Heart right ventricle (tissue), 16 donors: ENCODE measurements at regions of chr4 and their contacts with region 1.

Region 1: DNA sequence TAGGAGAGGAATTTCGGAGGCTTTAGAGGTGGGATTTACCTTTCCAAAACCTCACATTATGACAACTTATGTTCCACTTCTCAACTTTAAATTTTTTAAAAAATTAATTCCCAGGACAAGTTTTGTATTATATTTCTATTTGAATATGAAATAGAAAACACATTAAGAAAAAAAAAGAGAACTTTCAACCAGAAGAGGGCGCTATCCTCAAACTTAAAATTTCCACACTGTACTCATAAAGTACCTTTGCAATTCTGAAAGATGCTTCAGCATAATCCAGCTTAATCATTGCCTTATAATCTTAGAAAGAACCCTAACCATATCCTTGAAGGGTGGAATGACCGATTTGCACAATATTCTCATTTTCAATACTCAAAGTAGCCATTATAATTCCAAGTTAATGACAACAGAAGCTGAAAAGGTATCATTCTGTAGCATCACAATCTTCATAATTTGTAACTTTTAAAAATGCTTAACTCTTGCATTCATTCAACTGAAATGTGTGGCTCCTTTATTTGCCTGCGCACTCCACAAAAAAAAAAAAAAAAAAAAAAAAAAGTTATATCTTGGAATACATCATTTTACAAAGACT is 158.0 kb downstream of the KCNIP4 start:
- DNase-seq: no peak
- ATAC-seq: no peak
- H3K4me3 ChIP-seq: no peak overlapping the region
- H3K27ac ChIP-seq: no peak overlapping the region
- H3K4me1 ChIP-seq: no peaks in the 10 kb centered on the region
- H3K27me3 ChIP-seq: no peaks in the 10 kb centered on the region
- CTCF ChIP-seq: peak; percentile 11 to 62 (median 53)

Region 2: DNA sequence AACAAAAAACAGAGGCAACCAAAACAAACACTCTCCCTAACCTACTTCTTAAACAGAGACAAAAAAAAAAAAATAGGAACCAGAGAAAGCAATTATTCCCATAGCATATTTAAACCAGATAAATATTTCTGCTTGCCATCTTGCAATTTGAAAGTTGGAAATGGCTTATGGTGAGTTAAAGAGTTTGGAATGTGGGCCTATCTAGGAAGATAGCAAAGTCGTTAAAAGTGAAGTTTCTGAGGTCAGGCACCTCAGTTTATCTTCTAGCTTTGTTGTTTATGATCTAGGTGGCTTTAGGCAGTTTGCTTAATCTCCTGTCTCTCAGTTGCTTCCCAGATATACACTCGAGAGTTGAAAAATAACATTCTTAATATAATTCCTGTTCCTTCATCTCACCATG is 126.2 kb before region 1 on chr4:
- intact Hi-C with region 1: no loop called
- DNase-seq: no peak
- ATAC-seq: no peak
- H3K4me3 ChIP-seq: no peak overlapping the region
- H3K27ac ChIP-seq: no peak overlapping the region
- H3K4me1 ChIP-seq: no peaks in the 10 kb centered on the region
- H3K27me3 ChIP-seq: no peaks in the 10 kb centered on the region
- CTCF ChIP-seq: no peak

Region 3: DNA sequence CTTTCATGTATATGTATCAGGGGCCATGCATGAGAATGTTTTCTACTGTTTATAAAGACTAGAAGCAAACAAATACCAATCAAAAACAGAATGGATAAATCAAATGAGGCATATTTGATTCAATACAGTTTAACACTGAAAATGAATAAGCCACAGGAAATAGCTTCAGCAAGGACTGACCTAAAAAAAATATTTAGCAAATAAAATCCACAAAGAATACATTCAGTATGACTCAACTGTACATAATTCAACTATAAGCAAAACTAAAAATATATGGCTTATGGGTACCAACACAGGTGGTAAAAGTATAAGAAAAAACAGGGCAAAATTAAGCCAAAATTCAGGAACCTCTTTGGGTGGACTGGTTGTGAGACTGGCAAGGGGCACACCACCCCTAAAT is 45.2 kb after region 1 on chr4:
- intact Hi-C with region 1: no loop called
- DNase-seq: no peak
- ATAC-seq: no peak
- H3K4me3 ChIP-seq: no peak overlapping the region
- H3K27ac ChIP-seq: no peak overlapping the region
- H3K4me1 ChIP-seq: no peaks in the 10 kb centered on the region
- H3K27me3 ChIP-seq: no peaks in the 10 kb centered on the region
- CTCF ChIP-seq: no peak

Region 4: DNA sequence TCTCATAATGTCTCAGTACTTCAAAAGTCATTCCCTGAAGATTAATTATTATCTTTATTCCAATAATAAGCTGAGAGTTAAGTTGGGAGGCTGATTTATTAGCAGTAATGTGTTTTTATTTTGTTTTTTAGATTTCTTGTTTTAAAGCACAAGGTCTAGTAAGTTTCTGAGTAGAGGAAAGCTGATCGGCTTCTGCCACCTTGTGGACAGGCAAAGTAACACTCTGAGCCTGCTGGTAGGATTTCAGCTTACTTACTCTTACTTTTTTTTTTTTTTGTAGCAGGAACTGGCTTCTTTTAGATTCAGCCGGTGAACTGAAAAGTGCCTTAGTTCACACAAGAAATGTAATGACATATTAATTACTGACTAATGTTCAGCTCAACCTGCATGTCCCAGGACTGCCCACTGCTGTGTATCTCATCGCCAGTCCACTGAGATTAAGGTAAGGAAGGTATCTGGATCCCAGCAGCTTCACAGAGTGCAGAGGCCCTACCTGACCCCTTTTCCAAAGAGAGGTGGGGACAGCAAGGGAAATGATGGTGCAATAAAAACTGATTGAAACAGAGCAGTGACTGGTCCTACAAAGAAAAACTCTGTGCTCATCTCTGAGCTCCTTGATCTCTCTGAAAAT is 598.8 kb after region 1 on chr4:
- intact Hi-C with region 1: loop called (anchors 1 to 5 kb)
- DNase-seq: peak in 1 of 2 donors; percentile 25
- ATAC-seq: peak in 1 of 8 donors; percentile 42
- H3K4me3 ChIP-seq: no peak overlapping the region
- H3K27ac ChIP-seq: no peak overlapping the region
- H3K4me1 ChIP-seq: no peaks in the 10 kb centered on the region
- H3K27me3 ChIP-seq: no peaks in the 10 kb centered on the region
- CTCF ChIP-seq: peak; percentile 44 to 82 (median 71)